ENCODE measurements at regions of chr22 and their contacts with region 1.

Region 1: DNA sequence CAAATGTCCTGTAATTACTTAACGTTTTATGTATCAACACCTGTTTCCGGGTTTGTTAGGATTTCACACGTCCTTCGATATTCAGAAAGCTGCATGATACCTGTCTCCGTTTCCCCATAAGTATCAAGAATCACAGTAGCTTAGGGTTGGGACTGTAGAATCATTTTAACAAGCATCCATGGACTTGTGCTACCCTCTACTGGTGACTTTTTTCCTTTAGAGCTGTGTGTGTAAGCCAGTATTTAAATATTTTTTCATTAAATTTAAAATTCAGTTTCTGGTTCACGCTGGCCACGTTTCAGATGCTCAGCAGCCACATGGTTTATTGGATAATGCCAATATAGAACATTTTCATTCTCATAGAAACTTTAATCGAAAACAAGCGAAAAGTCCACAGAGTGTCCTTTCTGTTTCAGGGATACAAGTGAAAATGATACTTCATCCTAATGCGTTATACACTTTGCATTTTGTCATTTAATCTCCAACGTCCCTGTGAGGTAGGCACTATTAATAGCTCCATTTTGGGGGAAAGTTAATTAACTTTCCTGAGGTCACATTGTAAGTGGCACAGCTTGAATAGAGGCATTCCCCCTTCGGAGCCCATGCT is 61.5 kb upstream of the SLC25A18 start:
- DNase-seq: peak in 1 of 2 donors; percentile 50
- ATAC-seq: peak; percentile 78 to 93 (median 89)
- H3K4me3 ChIP-seq: no peak overlapping the region
- H3K27ac ChIP-seq: no peak overlapping the region
- H3K4me1 ChIP-seq: peaks cover 0 to 7% (median 0%) of the 10 kb centered on the region in 9 donors
- H3K27me3 ChIP-seq: no peaks in the 10 kb centered on the region
- CTCF ChIP-seq: peak; percentile 42 to 83 (median 68)

Region 2: GRCh38 chr22:16917144-16918003 is 584.4 kb before region 1 on chr22:
- intact Hi-C with region 1: loop called in 2 of 10 experiments (anchors 5 to 10 kb)
- DNase-seq: peak; percentile 49 to 56
- ATAC-seq: peak in 3 of 8 donors; percentile 38 to 70 (median 56)
- H3K4me3 ChIP-seq: no peak overlapping the region
- H3K27ac ChIP-seq: no peak overlapping the region
- H3K4me1 ChIP-seq: no peaks in the 10 kb centered on the region
- H3K27me3 ChIP-seq: peaks cover 0 to 79% (median 69%) of the 10 kb centered on the region in 7 donors
- CTCF ChIP-seq: peak; percentile 35 to 68 (median 64)

Region 3: DNA sequence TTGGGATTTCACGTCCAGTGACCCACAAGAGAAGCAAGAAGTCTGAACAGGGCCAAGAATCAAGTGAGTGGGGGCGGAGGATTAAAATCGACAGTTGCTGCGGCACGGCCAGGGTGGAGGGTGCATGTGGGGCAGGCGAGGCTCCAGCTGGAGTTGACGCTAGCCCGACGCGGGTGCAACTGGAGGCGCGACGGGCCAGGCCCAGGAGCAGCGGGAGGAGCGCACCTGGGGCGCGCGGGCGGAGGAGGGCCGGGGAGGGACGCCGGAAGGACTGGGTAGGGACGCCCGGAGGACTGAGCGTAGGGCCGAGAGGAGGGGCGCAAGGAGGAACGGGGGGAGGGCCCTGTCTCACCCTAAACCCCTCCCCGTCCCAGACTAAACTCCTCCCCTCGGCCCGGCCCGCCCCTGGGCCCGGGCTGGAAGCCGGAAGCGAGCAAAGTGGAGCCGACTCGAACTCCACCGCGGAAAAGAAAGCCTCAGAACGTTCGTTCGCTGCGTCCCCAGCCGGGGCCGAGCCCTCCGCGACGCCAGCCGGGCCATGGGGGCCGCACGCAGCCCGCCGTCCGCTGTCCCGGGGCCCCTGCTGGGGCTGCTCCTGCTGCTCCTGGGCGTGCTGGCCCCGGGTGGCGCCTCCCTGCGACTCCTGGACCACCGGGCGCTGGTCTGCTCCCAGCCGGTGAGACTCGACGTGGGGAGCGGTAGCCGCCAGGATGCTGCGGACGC is 417.1 kb before region 1 on chr22 and contains the start of gene IL17RA:
- intact Hi-C with region 1: loop called in 6 of 10 experiments (anchors 5 to 10 kb)
- DNase-seq: peak; percentile 92 to 93
- ATAC-seq: peak; percentile 98 to 99 (median 99)
- H3K4me3 ChIP-seq: peak within 1 kb of the TSS; percentile 72 to 98 (median 96)
- H3K27ac ChIP-seq: peak within 1 kb of the TSS; percentile 49 to 99 (median 90)
- H3K4me1 ChIP-seq: peaks cover 0 to 48% (median 17%) of the 10 kb centered on the region in 9 donors
- H3K27me3 ChIP-seq: no peaks in the 10 kb centered on the region
- CTCF ChIP-seq: peak in 1 of 9 donors; percentile 4
- total RNA-seq, gene IL17RA: 4.0 to 15.9 (median 5.9) TPM

Region 4: GRCh38 chr22:17213976-17214375 is 287.8 kb before region 1 on chr22:
- intact Hi-C with region 1: loop called in 7 of 10 experiments (anchors 5 to 10 kb)
- DNase-seq: peak; percentile 69 to 70
- ATAC-seq: peak in 6 of 8 donors; percentile 52 to 72 (median 64)
- H3K4me3 ChIP-seq: no peak overlapping the region
- H3K27ac ChIP-seq: no peak overlapping the region
- H3K4me1 ChIP-seq: peaks cover 0 to 38% (median 0%) of the 10 kb centered on the region in 9 donors
- H3K27me3 ChIP-seq: no peaks in the 10 kb centered on the region
- CTCF ChIP-seq: peak; percentile 27 to 64 (median 54)

Region 5: GRCh38 chr22:17368554-17369438 is 133.0 kb before region 1 on chr22:
- intact Hi-C with region 1: loop called in 8 of 10 experiments (anchors 2 to 10 kb)
- DNase-seq: peak; percentile 60 to 63
- ATAC-seq: peak; percentile 70 to 85 (median 76)
- H3K4me3 ChIP-seq: peak overlapping the region; percentile 41 to 88 (median 74)
- H3K27ac ChIP-seq: peak overlapping the region; percentile 64 to 90 (median 84)
- H3K4me1 ChIP-seq: peaks cover 0 to 29% (median 19%) of the 10 kb centered on the region in 9 donors
- H3K27me3 ChIP-seq: peaks cover 0 to 86% (median 3%) of the 10 kb centered on the region in 7 donors
- CTCF ChIP-seq: no peak

Region 6: GRCh38 chr22:17536269-17536668 is 34.5 kb after region 1 on chr22:
- intact Hi-C with region 1: no loop called
- DNase-seq: no peak
- ATAC-seq: peak in 1 of 8 donors; percentile 48
- H3K4me3 ChIP-seq: no peak overlapping the region
- H3K27ac ChIP-seq: no peak overlapping the region
- H3K4me1 ChIP-seq: no peaks in the 10 kb centered on the region
- H3K27me3 ChIP-seq: no peaks in the 10 kb centered on the region
- CTCF ChIP-seq: no peak